GM12878 (cell line): ENCODE measurements at regions of chr7 and their contacts with region 1.

Region 1: GRCh38 chr7:26686448-26686981 is 177.9 kb downstream of the SKAP2 start:
- DNase-seq: no peak
- ATAC-seq: peak; percentile 56
- H3K4me3 ChIP-seq: no peak overlapping the region
- H3K27ac ChIP-seq: no peak overlapping the region
- H3K4me1 ChIP-seq: peaks cover 14% of the 10 kb centered on the region; the same call in 1 of the 2 replicates
- H3K27me3 ChIP-seq: no peaks in the 10 kb centered on the region
- CTCF ChIP-seq: peak; percentile 32 to 48 (median 45); a peak in 5 of 6 replicates
- EP300 ChIP-seq: no peak
- POLR2A ChIP-seq: no peak
- RAD21 ChIP-seq: peak; percentile 63

Region 2: GRCh38 chr7:26485367-26485934 is 201.1 kb before region 1 on chr7:
- CTCF ChIA-PET with region 1: no interaction called
- POLR2A ChIA-PET with region 1: no interaction called
- RAD21 ChIA-PET with region 1: no interaction called
- SMC1A ChIA-PET with region 1: no interaction called
- in situ Hi-C with region 1: no loop called
- intact Hi-C with region 1: no loop called
- DNase-seq: no peak
- ATAC-seq: no peak
- H3K4me3 ChIP-seq: no peak overlapping the region
- H3K27ac ChIP-seq: no peak overlapping the region
- H3K4me1 ChIP-seq: no peaks in the 10 kb centered on the region
- H3K27me3 ChIP-seq: peaks cover 0 to 2% of the 10 kb centered on the region in 2 experiments; a peak in 1 of 4 replicates
- CTCF ChIP-seq: no peak
- EP300 ChIP-seq: no peak
- POLR2A ChIP-seq: no peak
- RAD21 ChIP-seq: no peak

Region 3: DNA sequence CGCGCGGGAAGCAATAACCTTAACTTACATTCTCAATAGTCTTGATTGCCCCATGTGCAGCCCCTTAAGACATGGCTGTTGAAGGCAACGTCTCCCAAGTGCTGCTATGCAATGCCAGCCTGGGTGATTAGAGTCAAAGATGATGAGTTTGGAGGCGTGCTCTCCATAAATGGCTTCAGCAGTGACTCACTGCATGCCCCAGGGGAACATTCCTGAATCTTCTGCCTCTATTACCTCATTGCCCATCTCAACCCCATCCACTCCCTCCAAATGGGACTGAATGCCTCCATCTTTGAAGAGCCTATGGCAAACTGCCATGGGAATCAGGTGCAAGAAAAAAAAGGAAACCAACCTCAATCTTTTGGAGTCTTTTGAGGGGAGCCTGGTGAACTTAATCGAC is 112.0 kb before region 1 on chr7:
- CTCF ChIA-PET with region 1: no interaction called
- POLR2A ChIA-PET with region 1: no interaction called
- RAD21 ChIA-PET with region 1: no interaction called
- SMC1A ChIA-PET with region 1: no interaction called
- in situ Hi-C with region 1: no loop called
- intact Hi-C with region 1: no loop called
- DNase-seq: no peak
- ATAC-seq: no peak
- H3K4me3 ChIP-seq: no peak overlapping the region
- H3K27ac ChIP-seq: no peak overlapping the region
- H3K4me1 ChIP-seq: no peaks in the 10 kb centered on the region
- H3K27me3 ChIP-seq: no peaks in the 10 kb centered on the region; a peak in 2 of 4 replicates
- CTCF ChIP-seq: no peak
- EP300 ChIP-seq: no peak
- POLR2A ChIP-seq: no peak
- RAD21 ChIP-seq: no peak

Region 4: GRCh38 chr7:26620352-26620751 is 66.2 kb before region 1 on chr7:
- CTCF ChIA-PET with region 1: no interaction called
- POLR2A ChIA-PET with region 1: no interaction called
- RAD21 ChIA-PET with region 1: no interaction called
- SMC1A ChIA-PET with region 1: no interaction called
- in situ Hi-C with region 1: no loop called
- intact Hi-C with region 1: no loop called
- DNase-seq: no peak
- ATAC-seq: no peak
- H3K4me3 ChIP-seq: no peak overlapping the region
- H3K27ac ChIP-seq: no peak overlapping the region
- H3K4me1 ChIP-seq: no peaks in the 10 kb centered on the region
- H3K27me3 ChIP-seq: no peaks in the 10 kb centered on the region
- CTCF ChIP-seq: no peak
- EP300 ChIP-seq: no peak
- POLR2A ChIP-seq: no peak
- RAD21 ChIP-seq: no peak

Region 5: GRCh38 chr7:26667500-26668133 is 18.9 kb before region 1 on chr7:
- CTCF ChIA-PET with region 1: interaction called, 17 read pairs
- POLR2A ChIA-PET with region 1: no interaction called
- RAD21 ChIA-PET with region 1: interaction called, 7 read pairs
- SMC1A ChIA-PET with region 1: interaction called, 6 read pairs
- in situ Hi-C with region 1: no loop called
- intact Hi-C with region 1: no loop called
- DNase-seq: peak; percentile 36
- ATAC-seq: peak; percentile 82
- H3K4me3 ChIP-seq: no peak overlapping the region
- H3K27ac ChIP-seq: no peak overlapping the region
- H3K4me1 ChIP-seq: no peaks in the 10 kb centered on the region
- H3K27me3 ChIP-seq: no peaks in the 10 kb centered on the region
- CTCF ChIP-seq: peak; percentile 64 to 91 (median 80); a peak in 5 of 6 replicates
- EP300 ChIP-seq: no peak
- POLR2A ChIP-seq: no peak
- RAD21 ChIP-seq: peak; percentile 78

Region 6: GRCh38 chr7:26699766-26700165 is 13.3 kb after region 1 on chr7:
- CTCF ChIA-PET with region 1: interaction called, 20 read pairs
- POLR2A ChIA-PET with region 1: no interaction called
- RAD21 ChIA-PET with region 1: interaction called, 4 read pairs
- SMC1A ChIA-PET with region 1: interaction called, 17 read pairs
- in situ Hi-C with region 1: no loop called
- intact Hi-C with region 1: no loop called
- DNase-seq: no peak
- ATAC-seq: no peak
- H3K4me3 ChIP-seq: no peak overlapping the region
- H3K27ac ChIP-seq: no peak overlapping the region
- H3K4me1 ChIP-seq: no peaks in the 10 kb centered on the region
- H3K27me3 ChIP-seq: no peaks in the 10 kb centered on the region
- CTCF ChIP-seq: no peak
- EP300 ChIP-seq: no peak
- POLR2A ChIP-seq: no peak
- RAD21 ChIP-seq: no peak

Region 7: GRCh38 chr7:26853788-26854393 is 167.4 kb after region 1 on chr7:
- CTCF ChIA-PET with region 1: interaction called, 30 read pairs
- POLR2A ChIA-PET with region 1: no interaction called
- RAD21 ChIA-PET with region 1: interaction called, 10 read pairs
- SMC1A ChIA-PET with region 1: interaction called, 10 read pairs
- in situ Hi-C with region 1: no loop called
- intact Hi-C with region 1: no loop called
- DNase-seq: no peak
- ATAC-seq: no peak
- H3K4me3 ChIP-seq: no peak overlapping the region
- H3K27ac ChIP-seq: no peak overlapping the region
- H3K4me1 ChIP-seq: 0 out of 2 replicates have a peak, but pooled peaks cover 5% of the 10 kb centered on the region
- H3K27me3 ChIP-seq: no peaks in the 10 kb centered on the region
- CTCF ChIP-seq: peak; percentile 27 to 42 (median 31); a peak in 4 of 6 replicates
- EP300 ChIP-seq: no peak
- POLR2A ChIP-seq: no peak
- RAD21 ChIP-seq: peak; percentile 50

Region 8: DNA sequence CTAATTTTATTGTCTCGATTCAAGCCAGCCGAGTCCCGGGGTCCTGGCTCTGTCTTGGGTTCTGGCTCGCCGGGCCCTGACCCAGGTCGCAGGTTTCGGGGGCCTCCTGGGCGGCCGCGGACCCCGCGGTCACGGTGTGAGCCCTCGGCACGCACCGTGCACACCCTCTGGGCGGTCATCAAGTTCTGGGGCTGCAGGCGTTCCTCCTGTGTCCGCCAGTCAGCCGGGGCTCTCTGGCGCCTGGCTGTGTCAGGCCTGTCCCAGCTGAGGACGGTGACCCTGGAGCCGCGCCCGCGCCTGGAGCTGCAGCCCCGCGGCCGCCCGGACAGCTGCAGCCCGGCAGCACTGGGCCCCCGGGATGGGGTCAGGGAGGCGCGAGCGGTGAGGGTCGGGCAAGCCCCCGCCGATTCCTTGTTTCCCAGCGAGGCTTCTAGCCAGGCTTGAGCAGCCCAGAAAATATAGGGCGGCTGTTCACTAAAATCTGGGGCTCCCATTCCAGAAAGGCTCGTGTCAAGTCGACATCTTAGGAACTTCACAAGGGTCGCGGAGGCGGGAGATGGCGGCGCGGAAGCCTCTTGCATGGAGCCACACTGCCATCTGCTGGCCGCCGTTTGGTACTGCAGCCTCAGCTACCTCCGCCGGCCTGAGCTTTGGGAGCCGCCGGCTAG is 474.2 kb after region 1 on chr7:
- CTCF ChIA-PET with region 1: interaction called, 100 read pairs
- POLR2A ChIA-PET with region 1: interaction called, 3 read pairs
- RAD21 ChIA-PET with region 1: interaction called, 46 read pairs
- SMC1A ChIA-PET with region 1: interaction called, 13 read pairs
- in situ Hi-C with region 1: no loop called
- intact Hi-C with region 1: loop called (anchors 1 kb)
- DNase-seq: peak; percentile 23
- ATAC-seq: peak; percentile 89
- H3K4me3 ChIP-seq: peak overlapping the region; percentile 72
- H3K27ac ChIP-seq: no peak overlapping the region
- H3K4me1 ChIP-seq: no peaks in the 10 kb centered on the region
- H3K27me3 ChIP-seq: peaks cover 17 to 38% of the 10 kb centered on the region in 2 experiments
- CTCF ChIP-seq: peak; percentile 87 to 98 (median 93)
- EP300 ChIP-seq: no peak
- POLR2A ChIP-seq: no peak
- RAD21 ChIP-seq: peak; percentile 70